Activated CD8-positive, alpha-beta memory T cell treated with anti-CD3 and anti-CD28 coated beads, Interleukin-2, amount 10 ng/mL, durations not matched to agents 7 days and 5 days (primary cell): ENCODE measurements at regions of chr11 and their contacts with region 1.

Region 1: DNA sequence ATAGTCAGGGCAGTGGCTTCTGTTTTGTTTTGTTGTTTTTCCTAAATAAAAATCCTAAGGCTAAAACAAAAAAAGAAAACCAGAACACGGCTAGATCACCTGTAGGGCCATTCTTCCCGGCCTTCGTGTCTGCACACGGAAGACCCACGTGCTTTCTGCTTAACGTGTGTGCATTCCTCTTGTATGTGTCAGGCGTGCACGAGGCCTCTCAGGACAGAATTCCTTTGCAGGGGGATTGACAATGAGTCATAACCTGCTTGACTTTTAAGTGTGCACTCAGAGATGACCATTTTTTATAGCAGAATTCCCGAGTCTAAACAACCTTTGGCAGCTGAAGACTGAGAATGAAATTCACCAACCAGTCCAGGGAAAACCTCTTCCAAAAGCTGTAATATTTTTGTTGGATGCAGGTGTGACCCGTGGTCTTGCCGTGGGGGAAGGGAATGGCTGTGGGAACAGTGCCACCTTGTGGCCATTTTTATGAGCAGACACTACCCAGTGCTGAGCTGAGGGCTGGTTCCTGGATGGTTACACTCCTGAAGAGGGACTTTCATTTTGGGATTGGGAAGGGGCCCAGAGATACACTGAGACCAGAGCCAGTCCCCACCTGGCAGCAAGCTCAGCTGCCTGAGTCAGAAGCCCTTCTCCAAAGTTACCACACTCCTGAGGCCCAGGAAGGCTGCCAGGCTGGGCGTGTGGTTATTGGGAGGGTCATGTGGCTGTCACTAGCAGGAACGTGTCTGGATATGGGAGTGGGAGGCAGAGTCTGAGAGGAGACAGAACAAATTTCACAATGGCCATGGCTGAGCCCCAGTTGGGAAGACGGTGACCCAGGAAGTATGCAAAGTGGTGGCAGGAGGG is 35.8 kb upstream of the DKK3 start:
- DNase-seq: peak; percentile 75
- ATAC-seq: peak; percentile 76
- H3K4me3 Mint-ChIP-seq: no peak overlapping the region
- H3K27ac Mint-ChIP-seq: no peak overlapping the region
- H3K4me1 Mint-ChIP-seq: peaks cover 11% of the 10 kb centered on the region
- H3K27me3 Mint-ChIP-seq: peaks cover 17% of the 10 kb centered on the region

Region 2: GRCh38 chr11:11675671-11676181 is 368.5 kb before region 1 on chr11:
- CTCF ChIA-PET with region 1: no interaction called
- DNase-seq: no peak
- ATAC-seq: no peak
- H3K4me3 Mint-ChIP-seq: no peak overlapping the region
- H3K27ac Mint-ChIP-seq: no peak overlapping the region
- H3K4me1 Mint-ChIP-seq: no peaks in the 10 kb centered on the region
- H3K27me3 Mint-ChIP-seq: peaks cover 11% of the 10 kb centered on the region

Region 3: GRCh38 chr11:11798586-11799438 is 245.4 kb before region 1 on chr11:
- CTCF ChIA-PET with region 1: interaction called, 13 read pairs
- DNase-seq: peak; percentile 83
- ATAC-seq: peak; percentile 91
- H3K4me3 Mint-ChIP-seq: no peak overlapping the region
- H3K27ac Mint-ChIP-seq: no peak overlapping the region
- H3K4me1 Mint-ChIP-seq: no peaks in the 10 kb centered on the region
- H3K27me3 Mint-ChIP-seq: peaks cover 37% of the 10 kb centered on the region

Region 4: DNA sequence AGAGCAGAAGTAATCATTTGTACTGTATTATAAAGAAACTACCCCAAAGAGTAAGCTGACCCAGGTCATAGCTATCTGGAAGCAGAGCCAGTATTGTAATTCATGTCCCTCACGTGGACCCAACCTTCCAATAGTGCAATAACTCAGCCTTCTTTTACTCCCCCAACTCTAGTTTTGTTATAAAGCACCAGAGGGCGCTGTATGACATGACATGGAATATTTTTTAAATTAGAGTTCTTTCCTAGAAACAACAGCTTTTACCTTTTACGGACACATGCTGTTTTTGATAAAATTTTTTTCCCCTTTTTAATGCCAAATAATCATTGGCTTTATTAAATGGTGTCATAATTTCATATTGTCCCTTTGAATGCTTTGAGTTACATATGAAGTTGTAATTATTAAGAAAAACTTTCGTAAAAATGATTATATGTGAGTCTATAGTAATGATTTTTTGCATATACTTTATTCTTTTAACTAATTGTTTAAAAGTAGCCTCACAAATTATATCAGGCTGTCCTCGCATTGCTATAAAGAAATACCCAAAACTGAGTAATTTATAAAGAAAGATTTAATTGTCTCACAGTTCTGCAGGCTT is 112.6 kb before region 1 on chr11:
- CTCF ChIA-PET with region 1: interaction called, 31 read pairs
- DNase-seq: no peak
- ATAC-seq: peak; percentile 51
- H3K4me3 Mint-ChIP-seq: no peak overlapping the region
- H3K27ac Mint-ChIP-seq: no peak overlapping the region
- H3K4me1 Mint-ChIP-seq: no peaks in the 10 kb centered on the region
- H3K27me3 Mint-ChIP-seq: no peaks in the 10 kb centered on the region

Region 5: GRCh38 chr11:12281571-12282478 is 237.6 kb after region 1 on chr11:
- CTCF ChIA-PET with region 1: interaction called, 472 read pairs
- DNase-seq: peak; percentile 84
- ATAC-seq: peak; percentile 77
- H3K4me3 Mint-ChIP-seq: no peak overlapping the region
- H3K27ac Mint-ChIP-seq: no peak overlapping the region
- H3K4me1 Mint-ChIP-seq: peaks cover 3% of the 10 kb centered on the region
- H3K27me3 Mint-ChIP-seq: no peaks in the 10 kb centered on the region